Gastrocnemius medialis (tissue), 4 donors: ENCODE measurements at regions of chr5 and their contacts with region 1.

Region 1: DNA sequence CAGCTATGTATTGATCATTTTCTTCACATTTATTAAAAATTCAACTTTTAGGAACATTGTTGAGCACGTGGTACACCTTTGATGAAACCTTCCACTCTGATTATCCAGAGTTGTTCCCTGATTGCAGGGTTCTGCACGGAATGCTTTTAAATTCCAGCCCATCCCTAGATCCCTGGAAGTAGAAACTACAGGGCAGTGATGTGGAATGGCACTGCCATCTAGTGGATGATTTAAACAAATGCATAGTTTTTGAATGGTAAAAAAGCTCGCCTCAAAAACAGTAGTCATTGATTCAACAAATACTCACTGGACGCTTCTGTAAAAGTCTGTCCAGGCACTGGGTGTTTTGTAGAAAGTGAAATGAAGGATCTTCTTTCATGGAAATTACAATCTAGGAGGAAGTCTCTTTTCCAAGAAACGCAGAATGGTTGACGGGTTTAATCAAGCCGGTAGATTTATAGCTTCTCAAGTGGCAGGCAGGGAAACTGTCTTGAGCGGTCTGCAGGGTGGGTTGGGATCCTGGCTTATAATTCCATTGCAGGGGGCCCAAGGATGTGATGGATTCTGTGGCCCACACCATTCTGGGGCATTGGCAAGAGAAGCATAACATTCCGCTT is 118.4 kb downstream of the ARHGAP26 start:
- DNase-seq: no peak
- ATAC-seq: peak; percentile 75 to 80
- H3K4me3 ChIP-seq: no peak overlapping the region
- H3K27ac ChIP-seq: no peak overlapping the region
- H3K4me1 ChIP-seq: no peaks in the 10 kb centered on the region
- H3K27me3 ChIP-seq: no peaks in the 10 kb centered on the region
- CTCF ChIP-seq: peak; percentile 63 to 80 (median 72)
- POLR2A ChIP-seq: no peak

Region 2: DNA sequence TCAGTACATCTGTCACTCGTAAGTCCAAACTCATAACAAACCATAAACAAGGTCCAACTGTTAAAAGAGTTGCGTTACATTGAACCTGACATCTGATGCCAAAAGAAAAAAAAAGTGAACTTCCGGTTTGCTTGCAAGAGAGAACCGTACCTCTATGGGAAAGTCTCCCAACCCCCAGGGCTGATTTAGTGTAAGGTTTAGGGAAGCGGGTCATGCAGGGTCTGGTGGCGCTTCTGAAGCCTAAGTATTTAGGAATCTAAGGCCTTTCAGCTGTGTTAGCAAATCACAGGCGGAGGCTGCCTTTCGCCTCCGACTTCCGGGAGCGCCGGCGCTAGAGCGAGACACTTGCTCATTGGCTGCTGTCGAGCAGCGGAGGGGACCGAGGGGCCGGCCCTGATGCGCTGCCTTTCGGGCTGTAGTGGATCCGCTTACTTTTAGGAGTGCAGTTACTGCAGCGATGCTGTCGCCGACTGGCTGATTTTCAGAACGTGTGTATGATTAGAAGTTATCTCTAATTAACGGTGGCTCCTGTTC is 863.7 kb before region 1 on chr5:
- in situ Hi-C with region 1: loop called in 1 of 4 experiments (anchors 25 kb)
- intact Hi-C with region 1: no loop called
- DNase-seq: peak; percentile 72 to 82
- ATAC-seq: peak; percentile 95 to 97
- H3K4me3 ChIP-seq: peak overlapping the region; percentile 58 to 65 (median 60)
- H3K27ac ChIP-seq: peak overlapping the region; percentile 79 to 91 (median 89)
- H3K4me1 ChIP-seq: peaks cover 7 to 9% of the 10 kb centered on the region in 2 donors
- H3K27me3 ChIP-seq: no peaks in the 10 kb centered on the region
- CTCF ChIP-seq: no peak
- POLR2A ChIP-seq: peak in 1 of 2 donors; percentile 32

Region 3: DNA sequence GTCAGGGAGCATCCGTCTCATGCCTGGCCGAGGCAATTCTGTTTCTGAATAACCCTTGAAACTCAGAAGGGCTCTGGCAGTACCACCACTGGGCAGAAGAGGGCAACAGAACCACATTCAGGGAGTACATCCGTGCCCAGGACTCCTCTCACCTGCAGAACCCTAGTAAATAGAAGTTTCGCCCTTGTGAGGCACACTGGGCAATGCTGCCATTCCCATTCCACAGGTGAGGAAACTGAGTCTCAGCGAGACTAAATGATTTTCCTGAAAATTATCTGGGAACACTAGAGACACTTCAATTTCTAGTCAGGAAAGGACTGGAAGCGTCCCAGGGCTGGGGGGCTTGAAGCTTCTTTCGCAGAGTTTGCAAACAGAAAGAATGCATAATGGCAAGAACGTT is 277.4 kb before region 1 on chr5:
- in situ Hi-C with region 1: loop called in 2 of 4 experiments (anchors 25 kb)
- intact Hi-C with region 1: no loop called
- DNase-seq: peak; percentile 12 to 44
- ATAC-seq: peak; percentile 58 to 72
- H3K4me3 ChIP-seq: no peak overlapping the region
- H3K27ac ChIP-seq: no peak overlapping the region
- H3K4me1 ChIP-seq: peaks cover 0 to 3% of the 10 kb centered on the region in 2 donors
- H3K27me3 ChIP-seq: no peaks in the 10 kb centered on the region
- CTCF ChIP-seq: peak; percentile 51 to 86 (median 73)
- POLR2A ChIP-seq: no peak

Region 4: GRCh38 chr5:142713121-142713706 is 175.4 kb before region 1 on chr5:
- in situ Hi-C with region 1: no loop called
- intact Hi-C with region 1: loop called (anchors 1 kb)
- DNase-seq: peak; percentile 68 to 83
- ATAC-seq: peak; percentile 95 to 97
- H3K4me3 ChIP-seq: peak overlapping the region; percentile 59 to 65 (median 62)
- H3K27ac ChIP-seq: peak overlapping the region; percentile 71 to 83 (median 80)
- H3K4me1 ChIP-seq: peaks cover 0 to 3% of the 10 kb centered on the region in 2 donors
- H3K27me3 ChIP-seq: no peaks in the 10 kb centered on the region
- CTCF ChIP-seq: peak; percentile 93 to 97 (median 96)
- POLR2A ChIP-seq: no peak

Region 5: GRCh38 chr5:142748568-142749249 is 139.9 kb before region 1 on chr5:
- in situ Hi-C with region 1: no loop called
- intact Hi-C with region 1: loop called (anchors 2 kb)
- DNase-seq: peak in 1 of 2 donors; percentile 11
- ATAC-seq: peak in 1 of 2 donors; percentile 39
- H3K4me3 ChIP-seq: no peak overlapping the region
- H3K27ac ChIP-seq: no peak overlapping the region
- H3K4me1 ChIP-seq: peaks cover 20 to 29% of the 10 kb centered on the region in 2 donors
- H3K27me3 ChIP-seq: no peaks in the 10 kb centered on the region
- CTCF ChIP-seq: peak; percentile 53 to 83 (median 77)
- POLR2A ChIP-seq: no peak